ENCODE measurements at regions of chr13 and their contacts with region 1.

Region 1: GRCh38 chr13:31891472-31891871 is 140.1 kb upstream of the FRY start:
- DNase-seq: no peak
- ATAC-seq: peak; percentile 46

Region 2: GRCh38 chr13:31846182-31846950 is 45.1 kb before region 1 on chr13:
- intact Hi-C with region 1: loop called (anchors 2 kb)
- DNase-seq: peak; percentile 97
- ATAC-seq: peak; percentile 99